MCF 10A (cell line): ENCODE measurements at regions of chr2 and their contacts with region 1.

Region 1: GRCh38 chr2:173151671-173152398 is 76.2 kb downstream of the MAP3K20 start:
- DNase-seq: peak; percentile 92
- H3K4me3 Mint-ChIP-seq: peak overlapping the region; percentile 24
- H3K27ac Mint-ChIP-seq: peak overlapping the region; percentile 91
- H3K4me1 Mint-ChIP-seq: peaks cover 56% of the 10 kb centered on the region
- H3K27me3 Mint-ChIP-seq: no peaks in the 10 kb centered on the region
- CTCF ChIP-seq: no peak

Region 2: DNA sequence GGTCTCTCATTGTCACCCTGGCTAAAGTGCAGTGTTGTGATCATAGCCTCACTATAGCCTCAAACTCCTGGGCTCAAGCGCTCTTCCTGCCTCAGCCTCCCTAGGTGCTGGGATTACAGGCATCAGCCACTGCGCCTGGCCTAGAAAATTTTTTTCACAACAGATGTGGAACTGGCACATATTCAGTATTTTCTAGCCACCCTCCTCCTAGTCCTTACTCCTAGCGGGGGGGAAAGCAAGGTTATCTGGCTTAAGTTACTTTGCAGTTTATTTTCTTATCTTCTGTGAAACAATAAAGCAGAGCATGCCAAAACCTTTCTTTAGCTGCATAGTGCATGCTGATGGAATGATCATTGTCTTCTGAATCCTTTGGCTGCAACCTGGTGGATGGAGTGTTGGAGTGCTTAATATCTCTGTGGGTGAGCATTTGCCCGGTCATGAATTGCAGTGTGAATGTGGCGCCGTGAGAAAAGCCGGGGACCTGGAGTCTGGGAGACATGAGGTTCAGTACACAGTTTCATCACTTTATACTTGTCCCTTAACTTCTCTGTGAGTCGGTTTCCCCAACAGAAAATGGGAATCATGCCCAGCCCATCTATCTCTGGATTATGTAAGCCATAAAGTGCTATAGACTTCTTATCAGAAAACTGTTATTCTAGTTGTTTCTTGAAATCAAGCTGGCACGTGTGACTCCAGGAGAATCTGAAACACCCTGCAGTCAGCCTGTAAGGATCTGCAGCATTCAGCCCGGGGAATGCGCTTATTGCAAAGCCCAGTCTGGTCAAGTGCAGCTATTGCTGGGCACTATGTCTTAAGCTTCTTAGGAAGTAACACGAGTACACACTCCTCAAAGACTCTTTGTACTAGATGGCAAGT is 114.4 kb before region 1 on chr2:
- CTCF ChIA-PET with region 1: no interaction called
- POLR2A ChIA-PET with region 1: no interaction called
- intact Hi-C with region 1: no loop called
- DNase-seq: no peak
- H3K4me3 Mint-ChIP-seq: no peak overlapping the region
- H3K27ac Mint-ChIP-seq: no peak overlapping the region
- H3K4me1 Mint-ChIP-seq: peaks cover 5% of the 10 kb centered on the region
- H3K27me3 Mint-ChIP-seq: no peaks in the 10 kb centered on the region
- CTCF ChIP-seq: no peak

Region 3: GRCh38 chr2:173048897-173049661 is 102.8 kb before region 1 on chr2:
- CTCF ChIA-PET with region 1: interaction called, 3 read pairs
- POLR2A ChIA-PET with region 1: interaction called, 12 read pairs
- intact Hi-C with region 1: no loop called
- DNase-seq: peak; percentile 98
- H3K4me3 Mint-ChIP-seq: peak overlapping the region; percentile 62
- H3K27ac Mint-ChIP-seq: peak overlapping the region; percentile 98
- H3K4me1 Mint-ChIP-seq: peaks cover 32% of the 10 kb centered on the region
- H3K27me3 Mint-ChIP-seq: no peaks in the 10 kb centered on the region
- CTCF ChIP-seq: no peak

Region 4: DNA sequence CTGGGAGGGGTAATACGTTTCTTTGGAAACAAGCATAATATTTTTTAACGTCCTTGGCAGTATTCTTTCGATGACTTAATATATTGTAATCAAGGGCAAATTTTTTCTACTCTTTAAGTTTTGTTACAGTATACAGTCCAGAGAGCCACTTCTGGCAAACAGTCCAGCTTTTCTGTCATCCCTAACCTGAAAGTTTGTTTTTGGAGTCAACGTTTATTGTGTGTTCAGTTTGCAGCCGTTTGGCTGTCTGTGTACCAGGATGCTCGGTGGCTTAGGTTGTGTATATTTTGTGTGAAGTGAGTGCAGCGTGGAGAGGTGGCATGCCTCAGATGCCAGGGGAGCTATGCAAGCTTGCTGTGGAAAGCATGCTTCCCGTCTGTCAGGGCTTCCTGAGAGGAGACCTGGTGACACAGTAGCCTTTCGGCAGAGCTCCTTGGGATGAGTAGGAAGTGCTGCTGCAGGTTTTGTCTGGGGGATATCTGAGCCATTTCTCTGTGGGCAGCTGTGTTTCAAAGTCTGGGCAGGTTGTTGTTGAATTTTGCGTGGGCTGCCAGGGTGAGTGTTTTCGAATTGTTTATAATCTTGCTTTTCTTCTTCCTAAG is 61.5 kb before region 1 on chr2:
- CTCF ChIA-PET with region 1: no interaction called
- POLR2A ChIA-PET with region 1: interaction called, 20 read pairs
- intact Hi-C with region 1: no loop called
- DNase-seq: no peak
- H3K4me3 Mint-ChIP-seq: peak overlapping the region; percentile 24
- H3K27ac Mint-ChIP-seq: peak overlapping the region; percentile 65
- H3K4me1 Mint-ChIP-seq: peaks cover 18% of the 10 kb centered on the region
- H3K27me3 Mint-ChIP-seq: no peaks in the 10 kb centered on the region
- CTCF ChIP-seq: no peak

Region 5: DNA sequence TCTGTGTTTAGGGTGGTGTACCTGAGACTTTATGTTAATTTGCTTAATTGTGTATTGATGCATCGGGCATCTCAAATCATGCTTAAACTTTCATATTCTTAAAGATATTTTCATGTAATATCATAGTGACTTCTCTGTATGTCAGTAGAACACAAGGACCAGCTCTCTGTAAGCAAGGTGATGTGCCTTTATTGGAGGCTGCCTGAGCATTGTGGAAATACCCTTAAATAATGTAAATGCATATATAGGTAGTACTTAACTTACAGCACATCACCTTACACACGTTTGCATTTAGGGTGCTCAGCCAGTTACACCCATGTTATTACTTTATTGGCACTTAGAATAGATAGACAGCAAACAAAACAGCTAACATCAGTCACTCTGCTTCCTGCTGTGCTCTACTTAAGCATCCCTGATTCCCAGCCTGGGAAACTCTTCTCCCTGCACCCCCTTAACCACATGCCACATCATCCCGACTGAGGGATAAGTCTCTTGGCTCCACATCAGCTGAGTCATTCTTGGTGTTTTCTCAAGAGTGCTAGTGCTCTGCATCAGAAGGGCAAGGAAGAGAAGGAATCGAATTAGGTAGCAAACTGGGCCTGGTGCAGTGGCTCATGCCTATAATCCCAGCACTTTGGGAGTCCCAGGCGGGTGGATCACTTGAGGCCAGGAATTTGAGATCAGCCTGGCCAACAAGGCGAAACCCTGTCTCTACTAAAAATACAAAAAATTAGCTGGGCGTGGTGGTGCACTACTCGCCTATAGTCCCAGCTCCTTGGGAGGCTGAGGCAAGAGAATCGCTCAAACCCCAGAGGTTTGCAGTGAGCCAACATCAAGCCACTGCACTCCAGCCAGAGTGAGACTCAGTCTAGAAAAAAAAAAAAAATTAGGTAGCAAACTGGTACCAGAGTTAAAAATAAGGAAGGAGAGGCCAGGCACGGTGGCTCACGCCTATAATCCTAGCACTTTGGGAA is 32.5 kb after region 1 on chr2:
- CTCF ChIA-PET with region 1: no interaction called
- POLR2A ChIA-PET with region 1: interaction called, 4 read pairs
- intact Hi-C with region 1: loop called (anchors 5 kb)
- DNase-seq: peak; percentile 99
- H3K4me3 Mint-ChIP-seq: no peak overlapping the region
- H3K27ac Mint-ChIP-seq: peak overlapping the region; percentile 1
- H3K4me1 Mint-ChIP-seq: peaks cover 23% of the 10 kb centered on the region
- H3K27me3 Mint-ChIP-seq: no peaks in the 10 kb centered on the region
- CTCF ChIP-seq: no peak